HEK293 (cell line): ENCODE measurements at regions of chr1 and their contacts with region 1.

Region 1: DNA sequence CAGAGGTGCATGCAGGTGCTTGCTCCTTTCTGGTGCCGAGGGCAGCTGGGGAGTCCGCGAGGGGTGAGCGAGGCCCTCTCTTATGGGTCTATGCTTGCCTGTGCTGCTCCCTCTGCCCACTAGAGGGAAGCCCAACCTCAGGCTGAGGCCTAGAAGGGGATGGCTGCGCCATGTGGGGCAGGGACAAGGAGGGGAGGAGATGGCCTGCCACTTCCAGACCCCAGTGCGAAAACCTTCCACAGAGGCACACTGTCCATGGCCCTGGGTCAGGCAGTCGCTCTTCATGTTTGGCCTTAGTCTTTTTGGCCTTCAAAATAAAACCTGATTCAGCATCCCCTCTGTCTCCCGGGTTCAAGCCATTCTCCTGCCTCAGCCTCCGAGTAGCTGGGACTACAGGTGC is 14.0 kb downstream of the RHBG start:
- H3K4me3 ChIP-seq: no peak overlapping the region
- H3K27ac ChIP-seq: no peak overlapping the region
- H3K4me1 ChIP-seq: no peaks in the 10 kb centered on the region
- CTCF ChIP-seq: peak; percentile 83

Region 2: DNA sequence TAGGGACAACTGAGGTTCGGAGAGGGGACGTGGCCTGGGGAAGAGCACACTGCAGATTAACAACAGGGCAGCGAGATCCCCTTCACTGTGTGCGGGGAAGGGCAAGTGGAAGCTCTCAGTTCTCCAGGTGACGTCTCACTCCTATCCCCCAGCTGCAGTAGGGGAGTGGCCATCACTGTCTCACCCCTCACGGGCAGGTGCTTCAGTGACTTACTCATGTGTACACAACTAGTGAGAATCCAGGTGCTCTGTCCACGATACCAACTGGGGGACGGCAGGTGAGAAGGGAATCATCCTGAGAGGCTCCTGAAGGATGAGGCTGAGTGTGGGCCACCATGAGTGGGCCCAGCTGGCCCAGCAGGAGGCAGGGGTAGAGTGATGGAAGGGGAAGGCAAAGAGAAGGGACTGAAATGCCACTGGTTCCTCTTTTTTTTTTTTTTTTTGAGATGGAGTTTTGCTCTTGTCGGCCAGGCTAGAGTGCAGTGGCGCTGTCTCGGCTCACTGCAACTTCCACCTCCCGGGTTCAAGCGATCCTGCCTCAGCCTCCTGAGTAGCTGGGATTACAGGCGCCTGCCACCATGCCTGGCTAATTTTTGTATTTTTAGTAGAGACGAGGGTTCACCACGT is 11.9 kb after region 1 on chr1:
- CTCF ChIA-PET with region 1: interaction called, 17 read pairs
- POLR2A ChIA-PET with region 1: no interaction called
- H3K4me3 ChIP-seq: no peak overlapping the region
- H3K27ac ChIP-seq: no peak overlapping the region
- H3K4me1 ChIP-seq: no peaks in the 10 kb centered on the region
- CTCF ChIP-seq: no peak

Region 3: GRCh38 chr1:156414461-156415064 is 31.5 kb after region 1 on chr1:
- CTCF ChIA-PET with region 1: interaction called, 23 read pairs
- POLR2A ChIA-PET with region 1: no interaction called
- H3K4me3 ChIP-seq: no peak overlapping the region
- H3K27ac ChIP-seq: no peak overlapping the region
- H3K4me1 ChIP-seq: no peaks in the 10 kb centered on the region
- CTCF ChIP-seq: no peak

Region 4: GRCh38 chr1:156429313-156430060 is 46.5 kb after region 1 on chr1:
- CTCF ChIA-PET with region 1: interaction called, 44 read pairs
- POLR2A ChIA-PET with region 1: no interaction called
- H3K4me3 ChIP-seq: no peak overlapping the region
- H3K27ac ChIP-seq: no peak overlapping the region
- H3K4me1 ChIP-seq: no peaks in the 10 kb centered on the region
- CTCF ChIP-seq: no peak

Region 5: GRCh38 chr1:156445789-156446263 is 62.8 kb after region 1 on chr1:
- CTCF ChIA-PET with region 1: interaction called, 439 read pairs
- POLR2A ChIA-PET with region 1: interaction called, 13 read pairs
- H3K4me3 ChIP-seq: no peak overlapping the region
- H3K27ac ChIP-seq: no peak overlapping the region
- H3K4me1 ChIP-seq: no peaks in the 10 kb centered on the region
- CTCF ChIP-seq: peak; percentile 88

Region 6: GRCh38 chr1:156461781-156462647 is 79.0 kb after region 1 on chr1:
- CTCF ChIA-PET with region 1: interaction called, 12 read pairs
- POLR2A ChIA-PET with region 1: interaction called, 7 read pairs
- H3K4me3 ChIP-seq: no peak overlapping the region
- H3K27ac ChIP-seq: no peak overlapping the region
- H3K4me1 ChIP-seq: no peaks in the 10 kb centered on the region; the same call in 1 of the 2 replicates
- CTCF ChIP-seq: no peak